Activated naive CD4-positive, alpha-beta T cell treated with anti-CD3 and anti-CD28 coated beads for 36 hours (primary cell): ENCODE measurements at regions of chr6 and their contacts with region 1.

Region 1: DNA sequence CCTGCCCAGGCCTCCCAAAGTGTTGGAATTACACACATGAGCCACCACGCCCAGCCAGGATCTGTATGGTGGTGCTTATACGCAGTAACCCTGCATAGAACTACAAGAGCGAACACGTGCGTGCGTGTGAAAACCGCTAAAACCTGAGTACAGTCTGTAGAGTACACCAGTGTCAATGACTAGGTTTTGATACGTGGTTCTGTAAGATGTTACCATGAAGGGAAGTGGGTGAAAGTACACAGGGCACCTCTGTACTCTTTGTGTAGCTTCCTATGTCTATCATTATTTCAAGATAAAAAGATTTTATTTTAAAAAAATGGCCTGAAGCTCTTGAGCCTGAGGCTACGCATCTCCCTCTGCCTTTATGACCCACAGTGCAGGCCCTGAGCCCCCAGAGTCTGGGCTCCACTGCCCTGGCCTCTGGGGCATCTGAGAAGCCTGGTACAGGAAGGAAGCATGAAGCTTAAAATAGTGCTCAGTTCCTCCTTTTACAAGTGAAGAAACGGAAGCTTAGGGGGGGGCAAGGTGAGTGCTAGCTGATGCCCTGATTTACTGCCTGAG is 21.6 kb downstream of the LY86 start:
- DNase-seq: peak; percentile 73
- H3K4me3 Mint-ChIP-seq: peak overlapping the region; percentile 5
- H3K27ac Mint-ChIP-seq: peak overlapping the region; percentile 83
- H3K4me1 Mint-ChIP-seq: peaks cover 57% of the 10 kb centered on the region
- H3K27me3 Mint-ChIP-seq: no peaks in the 10 kb centered on the region

Region 2: GRCh38 chr6:6588064-6588923 is 21.8 kb before region 1 on chr6 and contains the start of gene LY86:
- CTCF ChIA-PET with region 1: interaction called, 9 read pairs
- intact Hi-C with region 1: loop called (anchors 1 kb)
- DNase-seq: peak; percentile 46
- H3K4me3 Mint-ChIP-seq: peak within 1 kb of the TSS; percentile 75
- H3K27ac Mint-ChIP-seq: peak within 1 kb of the TSS; percentile 87
- H3K4me1 Mint-ChIP-seq: peaks cover 75% of the 10 kb centered on the region
- H3K27me3 Mint-ChIP-seq: no peaks in the 10 kb centered on the region
- total RNA-seq, gene LY86: 1.8 to 2.0 TPM

Region 3: DNA sequence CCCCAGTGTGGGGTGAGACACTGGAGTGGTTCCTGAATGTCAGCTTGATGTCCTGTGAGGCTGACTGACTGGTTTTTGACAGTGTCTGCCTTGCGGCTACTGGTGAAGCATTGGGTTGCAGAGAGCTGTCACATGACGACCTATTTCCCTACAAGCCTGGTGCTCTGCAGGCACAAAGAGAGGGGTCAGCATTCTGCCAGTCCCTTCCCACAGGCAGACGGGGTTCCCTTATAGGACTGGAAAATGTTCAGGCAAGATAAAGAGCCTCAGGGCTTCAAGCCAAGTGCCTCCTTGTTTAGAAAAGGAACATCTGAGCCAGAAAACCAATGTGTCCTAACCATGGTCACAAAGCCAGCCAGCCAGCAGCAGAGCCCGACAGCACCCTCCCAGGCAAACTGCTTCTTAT is 10.6 kb before region 1 on chr6:
- CTCF ChIA-PET with region 1: interaction called, 4 read pairs
- intact Hi-C with region 1: loop called (anchors 1 kb)
- DNase-seq: no peak
- H3K4me3 Mint-ChIP-seq: no peak overlapping the region
- H3K27ac Mint-ChIP-seq: no peak overlapping the region
- H3K4me1 Mint-ChIP-seq: peaks cover 28% of the 10 kb centered on the region
- H3K27me3 Mint-ChIP-seq: no peaks in the 10 kb centered on the region

Region 4: DNA sequence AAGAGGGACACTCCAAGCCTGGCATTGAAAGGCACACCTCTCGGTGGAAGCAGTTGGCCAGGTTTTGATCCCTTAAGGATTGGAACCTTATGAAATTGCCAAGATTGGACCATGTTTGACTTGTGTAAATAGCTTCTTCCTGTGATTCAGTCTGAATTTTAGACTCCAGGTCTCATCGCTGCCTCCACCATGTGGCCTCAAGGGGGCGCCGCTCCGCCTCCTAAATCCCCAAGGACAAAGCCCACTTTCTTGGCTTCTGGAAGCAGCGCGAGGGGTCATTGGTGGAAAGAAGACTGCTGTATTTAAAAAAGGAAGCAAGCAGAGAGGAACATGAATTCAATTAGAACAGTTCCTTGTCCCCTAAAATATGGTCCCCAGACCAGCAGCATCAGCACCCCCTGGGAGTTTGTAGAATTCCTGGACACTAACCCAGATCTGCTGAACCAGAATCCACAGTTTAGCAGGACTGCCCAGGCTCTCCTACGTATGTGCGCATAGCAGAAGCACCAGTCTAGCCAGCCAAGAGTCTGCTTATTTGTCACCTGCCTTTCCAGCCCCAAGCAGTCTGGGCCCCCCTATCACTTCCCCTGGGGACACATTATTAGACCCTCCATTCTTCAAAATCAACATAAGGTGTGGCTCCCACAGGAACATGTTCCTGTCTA is 86.9 kb after region 1 on chr6:
- CTCF ChIA-PET with region 1: no interaction called
- intact Hi-C with region 1: no loop called
- DNase-seq: peak; percentile 65
- H3K4me3 Mint-ChIP-seq: no peak overlapping the region
- H3K27ac Mint-ChIP-seq: no peak overlapping the region
- H3K4me1 Mint-ChIP-seq: no peaks in the 10 kb centered on the region
- H3K27me3 Mint-ChIP-seq: peaks cover 10% of the 10 kb centered on the region